Left lung (tissue), 14 donors: ENCODE measurements at regions of chr11 and their contacts with region 1.

Region 1: DNA sequence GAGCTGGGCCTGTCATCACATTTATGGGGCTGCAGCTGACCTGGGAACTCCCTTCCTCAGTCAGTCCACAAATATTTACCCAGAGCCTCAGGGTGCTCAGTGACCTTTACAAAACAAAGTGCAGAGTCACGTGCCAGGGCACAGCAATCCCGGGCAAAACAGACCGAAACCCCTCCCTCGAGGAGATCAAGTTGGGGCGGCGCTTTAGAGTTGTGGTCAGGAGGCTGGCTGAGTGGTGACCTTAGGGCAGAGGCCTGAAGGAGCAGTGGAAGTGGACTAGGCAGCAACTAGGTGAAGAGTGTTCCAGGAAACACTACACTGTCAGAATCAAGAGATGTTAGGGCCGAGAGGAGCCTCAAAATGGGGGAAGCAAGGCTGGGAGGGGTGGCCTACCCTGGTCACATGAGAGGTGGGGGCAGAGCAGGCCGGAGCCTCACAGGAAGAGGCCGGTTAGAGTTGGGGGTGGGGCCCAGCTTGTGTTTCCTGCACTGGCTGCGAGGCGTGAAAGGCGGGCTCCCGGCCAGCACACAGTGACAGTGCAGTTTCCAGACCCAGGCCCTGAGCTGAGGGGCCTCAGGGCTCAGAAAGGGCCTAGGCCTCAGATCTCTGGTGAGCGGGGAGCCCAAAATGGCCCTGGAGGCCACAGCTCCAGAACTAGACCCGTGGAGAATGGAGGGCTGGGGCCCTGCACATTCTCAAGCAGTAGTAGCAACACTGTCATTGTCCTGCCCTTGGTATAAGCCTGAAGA is 3.7 kb upstream of the NEAT1 start:
- DNase-seq: peak; percentile 90 to 98 (median 97)
- ATAC-seq: peak; percentile 31
- H3K4me3 ChIP-seq: peak overlapping the region; percentile 13 to 80
- H3K27ac ChIP-seq: peak overlapping the region; percentile 99 to 100
- H3K4me1 ChIP-seq: peaks cover 49 to 63% of the 10 kb centered on the region in 2 donors
- H3K27me3 ChIP-seq: no peaks in the 10 kb centered on the region
- CTCF ChIP-seq: no peak

Region 2: DNA sequence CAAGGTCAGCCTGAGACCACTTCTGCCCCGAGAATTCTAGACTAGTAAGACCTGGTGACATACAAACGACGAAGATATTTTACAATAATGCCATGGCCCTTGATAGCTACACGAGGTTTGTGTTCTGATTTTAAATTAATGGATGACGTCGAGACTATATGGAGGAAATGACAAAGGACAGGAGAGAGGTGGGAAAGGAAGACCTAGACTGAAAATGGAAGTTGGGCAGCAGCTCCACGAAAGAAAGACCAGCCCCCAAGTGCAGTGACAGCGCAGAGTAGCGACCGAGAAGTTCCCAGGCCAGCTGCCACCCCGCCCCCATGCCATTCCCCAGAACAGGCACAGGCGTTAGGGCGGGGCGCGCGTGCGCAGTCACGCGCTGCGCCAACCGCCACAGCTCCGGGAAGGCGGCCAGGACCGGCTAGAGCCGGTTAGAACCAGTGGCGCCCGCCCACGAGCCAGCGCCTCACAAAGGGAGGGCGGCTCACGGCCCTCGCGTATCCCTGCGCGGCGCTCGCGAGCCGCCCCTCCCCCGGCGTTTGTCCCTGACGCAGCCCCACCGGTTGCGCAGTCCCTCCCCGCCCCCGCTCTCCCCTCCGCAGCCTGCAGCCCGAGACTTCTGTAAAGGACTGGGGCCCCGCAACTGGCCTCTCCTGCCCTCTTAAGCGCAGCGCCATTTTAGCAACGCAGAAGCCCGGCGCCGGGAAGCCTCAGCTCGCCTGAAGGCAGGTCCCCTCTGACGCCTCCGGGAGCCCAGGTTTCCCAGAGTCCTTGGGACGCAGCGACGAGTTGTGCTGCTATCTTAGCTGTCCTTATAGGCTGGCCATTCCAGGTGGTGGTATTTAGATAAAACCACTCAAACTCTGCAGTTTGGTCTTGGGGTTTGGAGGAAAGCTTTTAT is 78.5 kb after region 1 on chr11:
- intact Hi-C with region 1: loop called (anchors 5 kb)
- DNase-seq: peak; percentile 98 to 100 (median 100)
- ATAC-seq: peak; percentile 74
- H3K4me3 ChIP-seq: peak overlapping the region; percentile 50 to 77
- H3K27ac ChIP-seq: peak overlapping the region; percentile 98 to 99
- H3K4me1 ChIP-seq: peaks cover 38 to 47% of the 10 kb centered on the region in 2 donors
- H3K27me3 ChIP-seq: no peaks in the 10 kb centered on the region
- CTCF ChIP-seq: no peak

Region 3: GRCh38 chr11:65506770-65507505 is 88.1 kb after region 1 on chr11:
- intact Hi-C with region 1: loop called (anchors 5 kb)
- DNase-seq: peak in 2 of 4 donors; percentile 71 to 85
- ATAC-seq: peak; percentile 43
- H3K4me3 ChIP-seq: peak overlapping the region in 1 of 2 donors; percentile 50
- H3K27ac ChIP-seq: peak overlapping the region; percentile 98 to 99
- H3K4me1 ChIP-seq: peaks cover 3 to 57% of the 10 kb centered on the region in 2 donors
- H3K27me3 ChIP-seq: no peaks in the 10 kb centered on the region
- CTCF ChIP-seq: no peak

Region 4: DNA sequence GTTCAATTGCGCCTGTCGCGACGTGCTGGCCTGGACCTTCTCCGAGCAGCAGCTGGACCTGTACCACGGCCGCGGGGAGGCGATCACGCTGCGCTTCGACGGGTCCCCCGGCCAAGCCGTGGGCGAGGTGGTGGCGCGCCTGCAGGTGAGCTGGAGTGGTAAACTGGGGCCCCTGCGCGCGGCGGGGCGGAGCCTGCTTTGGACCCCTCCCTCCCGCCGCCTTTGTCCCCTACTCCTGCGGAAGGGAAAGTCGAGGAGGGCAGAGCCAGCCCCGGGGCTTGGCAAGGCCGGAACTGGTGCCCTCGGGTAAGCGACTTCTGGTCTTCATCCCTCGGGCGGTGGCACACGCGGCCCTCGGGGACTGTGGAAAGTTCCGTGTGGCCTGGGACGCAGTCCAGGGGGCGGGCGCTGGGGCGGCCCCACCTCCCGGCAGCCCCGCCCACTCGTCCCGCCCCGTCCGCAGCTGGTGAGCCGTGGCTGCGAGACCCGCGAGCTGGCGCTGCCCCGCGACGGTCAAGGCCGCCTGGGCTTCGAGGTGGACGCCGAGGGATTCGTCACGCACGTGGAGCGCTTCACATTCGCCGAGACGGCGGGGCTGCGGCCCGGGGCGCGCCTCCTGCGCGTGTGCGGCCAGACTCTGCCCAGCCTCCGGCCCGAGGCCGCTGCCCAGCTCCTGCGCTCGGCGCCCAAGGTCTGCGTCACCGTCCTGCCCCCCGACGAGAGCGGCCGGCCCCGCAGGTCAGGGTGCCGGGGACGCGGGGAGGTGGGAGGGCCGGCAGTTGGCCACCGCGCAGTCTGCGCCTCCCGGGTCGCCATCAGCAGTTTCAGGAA is 228.3 kb after region 1 on chr11:
- intact Hi-C with region 1: no loop called
- DNase-seq: peak in 2 of 4 donors; percentile 53 to 82
- ATAC-seq: peak; percentile 81
- H3K4me3 ChIP-seq: peak overlapping the region; percentile 27 to 37
- H3K27ac ChIP-seq: peak overlapping the region in 1 of 2 donors; percentile 48
- H3K4me1 ChIP-seq: peaks cover 14 to 35% of the 10 kb centered on the region in 2 donors
- H3K27me3 ChIP-seq: no peaks in the 10 kb centered on the region
- CTCF ChIP-seq: no peak